Vagina (tissue), 2 donors: ENCODE measurements at regions of chr12 and their contacts with region 1.

Region 1: GRCh38 chr12:118372541-118373495 is at the start of gene TAOK3:
- DNase-seq: peak; percentile 99
- H3K4me3 ChIP-seq: peak within 1 kb of the TSS; percentile 68 to 83
- H3K27ac ChIP-seq: peak within 1 kb of the TSS; percentile 84
- H3K4me1 ChIP-seq: peaks cover 55% of the 10 kb centered on the region
- H3K27me3 ChIP-seq: no peaks in the 10 kb centered on the region
- CTCF ChIP-seq: no peak
- POLR2A ChIP-seq: peak in 1 of 2 donors; percentile 95
- total RNA-seq, gene TAOK3: 41.0 TPM

Region 2: DNA sequence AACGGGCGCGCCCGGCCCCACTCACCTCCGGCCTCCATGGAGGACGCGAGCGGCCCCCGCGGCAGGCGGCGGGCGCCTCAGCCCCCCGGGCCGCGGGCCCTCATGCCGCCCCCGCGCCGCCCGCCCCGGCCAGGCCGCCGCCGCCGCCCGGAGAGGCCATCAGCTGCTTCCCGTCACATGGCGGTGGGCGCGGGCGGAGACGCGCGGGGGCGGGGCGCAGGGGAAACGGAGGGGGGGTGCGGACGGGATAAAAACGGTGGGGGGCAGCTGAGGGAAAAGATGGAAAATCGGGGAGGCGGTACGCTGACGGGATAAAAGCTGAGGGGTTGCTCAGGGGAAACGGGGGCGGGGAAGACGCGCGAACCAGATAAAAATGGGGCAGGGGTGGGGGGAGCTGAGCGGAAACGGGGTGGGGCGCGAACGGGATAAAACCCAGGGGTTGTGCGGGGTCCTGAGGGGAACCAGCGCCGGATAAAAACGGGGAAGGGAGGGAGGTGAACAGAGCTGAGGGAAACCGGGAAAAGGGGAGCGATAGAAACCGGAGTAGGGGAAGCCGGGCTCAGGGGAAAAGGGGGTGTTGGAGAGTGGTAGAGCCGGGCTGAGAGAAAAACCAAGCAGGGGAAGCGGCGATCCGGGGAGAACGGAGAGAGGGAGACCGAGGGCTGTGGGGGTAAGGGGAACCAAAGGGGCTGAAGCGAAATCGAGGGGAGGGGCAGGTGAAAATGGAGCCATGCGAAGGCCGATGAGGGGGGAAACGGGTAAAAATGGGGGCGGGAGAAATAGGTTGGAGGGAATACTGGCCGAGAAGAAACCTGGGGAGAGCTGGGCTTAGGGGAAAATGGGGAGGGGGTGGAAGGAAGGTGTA is 311.6 kb before region 1 on chr12 and contains the start of gene WSB2:
- intact Hi-C with region 1: loop called (anchors 5 kb)
- DNase-seq: no peak
- H3K4me3 ChIP-seq: peak within 1 kb of the TSS; percentile 79 to 93
- H3K27ac ChIP-seq: peak within 1 kb of the TSS; percentile 99
- H3K4me1 ChIP-seq: peaks cover 45% of the 10 kb centered on the region
- H3K27me3 ChIP-seq: no peaks in the 10 kb centered on the region
- CTCF ChIP-seq: no peak
- POLR2A ChIP-seq: peak in 1 of 2 donors; percentile 20
- total RNA-seq, gene WSB2: 44.0 TPM

Region 3: GRCh38 chr12:118120579-118121363 is 252.0 kb before region 1 on chr12:
- intact Hi-C with region 1: loop called (anchors 5 kb)
- DNase-seq: no peak
- H3K4me3 ChIP-seq: no peak overlapping the region
- H3K27ac ChIP-seq: no peak overlapping the region
- H3K4me1 ChIP-seq: no peaks in the 10 kb centered on the region
- H3K27me3 ChIP-seq: no peaks in the 10 kb centered on the region
- CTCF ChIP-seq: peak in 1 of 3 experiments; percentile 71
- POLR2A ChIP-seq: no peak

Region 4: GRCh38 chr12:118135788-118136558 is 236.8 kb before region 1 on chr12 and contains the start of gene PEBP1:
- intact Hi-C with region 1: loop called (anchors 5 kb)
- DNase-seq: peak in 1 of 2 donors; percentile 93
- H3K4me3 ChIP-seq: peak within 1 kb of the TSS; percentile 77 to 85
- H3K27ac ChIP-seq: peak within 1 kb of the TSS; percentile 87
- H3K4me1 ChIP-seq: peaks cover 46% of the 10 kb centered on the region
- H3K27me3 ChIP-seq: no peaks in the 10 kb centered on the region
- CTCF ChIP-seq: peak in 1 of 3 experiments; percentile 7
- POLR2A ChIP-seq: peak in 1 of 2 donors; percentile 87
- total RNA-seq, gene PEBP1: 167 TPM

Region 5: DNA sequence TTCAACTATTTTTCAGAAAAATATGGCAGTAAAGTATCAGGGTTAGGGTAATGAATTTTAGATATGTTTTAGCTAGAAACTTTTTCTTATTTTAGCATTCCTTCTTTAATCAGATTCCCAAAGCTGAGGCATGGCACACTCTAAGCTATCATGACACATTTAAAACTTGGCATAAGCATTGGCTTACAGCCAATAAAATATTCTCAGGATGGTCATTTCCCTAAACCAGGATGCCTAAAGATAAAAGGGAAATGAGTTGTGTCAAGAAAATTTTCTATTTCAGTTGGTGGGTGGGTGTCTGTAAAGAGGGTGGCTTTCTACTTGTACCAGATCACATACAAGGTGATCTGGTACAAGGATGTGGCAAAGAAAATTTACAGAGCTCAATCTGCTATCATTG is 189.1 kb before region 1 on chr12:
- intact Hi-C with region 1: loop called (anchors 2 kb)
- DNase-seq: no peak
- H3K4me3 ChIP-seq: no peak overlapping the region
- H3K27ac ChIP-seq: no peak overlapping the region
- H3K4me1 ChIP-seq: peaks cover 8% of the 10 kb centered on the region
- H3K27me3 ChIP-seq: no peaks in the 10 kb centered on the region
- CTCF ChIP-seq: no peak
- POLR2A ChIP-seq: no peak